AG04450 (cell line): ENCODE measurements at regions of chr5 and their contacts with region 1.

Region 1: GRCh38 chr5:31317642-31318041 is 124.2 kb downstream of the CDH6 start:
- DNase-seq: no peak
- H3K4me3 ChIP-seq: no peak overlapping the region
- H3K27ac ChIP-seq: no peak overlapping the region
- H3K27me3 ChIP-seq: no peaks in the 10 kb centered on the region
- CTCF ChIP-seq: no peak

Region 2: GRCh38 chr5:31300501-31300900 is 17.1 kb before region 1 on chr5:
- CTCF ChIA-PET with region 1: interaction called, 11 read pairs
- POLR2A ChIA-PET with region 1: no interaction called
- DNase-seq: no peak
- H3K4me3 ChIP-seq: no peak overlapping the region
- H3K27ac ChIP-seq: no peak overlapping the region
- H3K27me3 ChIP-seq: no peaks in the 10 kb centered on the region
- CTCF ChIP-seq: no peak